Endothelial cell of umbilical vein (primary cell): ENCODE measurements at regions of chr7 and their contacts with region 1.

Region 1: DNA sequence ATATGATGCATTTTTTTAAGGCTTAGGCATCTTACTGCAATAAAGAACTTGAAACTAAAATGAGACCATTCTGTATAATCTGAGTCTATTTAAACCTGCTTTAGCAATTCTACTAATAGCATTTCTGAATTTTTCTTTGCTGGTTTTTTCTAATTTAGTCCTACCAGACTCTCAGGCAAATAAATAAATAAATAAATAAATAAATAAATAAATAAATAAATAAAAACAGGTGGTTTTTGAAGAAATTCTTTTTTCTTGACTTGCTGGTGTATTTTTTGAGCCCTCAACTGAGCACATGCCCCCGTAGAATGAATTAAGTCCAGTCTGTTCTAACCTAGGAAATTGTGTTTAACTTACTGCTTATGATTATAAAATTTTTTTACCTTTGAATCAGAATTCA is 134.7 kb upstream of the FOXP2 start:
- DNase-seq: no peak
- H3K4me3 ChIP-seq: no peak overlapping the region
- H3K27ac ChIP-seq: no peak overlapping the region
- H3K4me1 ChIP-seq: no peaks in the 10 kb centered on the region
- H3K27me3 ChIP-seq: no peaks in the 10 kb centered on the region
- CTCF ChIP-seq: no peak
- POLR2A ChIP-seq: no peak

Region 2: DNA sequence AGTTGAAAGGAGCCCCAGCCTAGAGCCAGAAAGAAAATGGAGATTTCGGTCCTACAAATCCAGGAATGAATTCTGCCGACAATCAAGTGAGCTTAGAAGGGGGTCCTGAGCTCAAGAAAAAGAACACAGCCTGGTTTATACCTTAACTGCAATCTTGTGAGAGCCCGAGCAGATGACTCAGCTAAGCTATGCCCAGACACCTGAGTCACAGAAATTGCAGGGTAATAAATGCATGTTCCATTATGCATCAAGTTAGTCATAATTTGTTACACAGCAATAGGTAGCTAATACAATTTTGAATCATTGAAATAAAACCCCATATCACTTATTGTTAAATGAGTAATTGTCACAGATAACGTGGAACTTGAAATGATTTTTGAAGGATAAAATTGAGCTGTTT is 23.0 kb after region 1 on chr7:
- CTCF ChIA-PET with region 1: no interaction called
- POLR2A ChIA-PET with region 1: no interaction called
- dilution Hi-C with region 1: no loop called
- intact Hi-C with region 1: loop called (anchors 2 kb)
- DNase-seq: no peak
- H3K4me3 ChIP-seq: no peak overlapping the region
- H3K27ac ChIP-seq: no peak overlapping the region
- H3K4me1 ChIP-seq: no peaks in the 10 kb centered on the region
- H3K27me3 ChIP-seq: no peaks in the 10 kb centered on the region
- CTCF ChIP-seq: no peak
- POLR2A ChIP-seq: no peak